ENCODE measurements at regions of chr1 and their contacts with region 1.

Region 1: GRCh38 chr1:154272217-154272998 is at the start of gene HAX1:
- DNase-seq: peak; percentile 87 to 94
- H3K4me3 ChIP-seq: peak within 1 kb of the TSS; percentile 95
- H3K27ac ChIP-seq: peak within 1 kb of the TSS; percentile 78
- H3K4me1 ChIP-seq: peaks cover 10% of the 10 kb centered on the region
- H3K27me3 ChIP-seq: no peaks in the 10 kb centered on the region
- CTCF ChIP-seq: peak; percentile 86
- total RNA-seq, gene HAX1: 89.7 and 92.3 TPM in 2 replicates

Region 2: GRCh38 chr1:153796791-153797659 is 475.4 kb before region 1 on chr1:
- CTCF ChIA-PET with region 1: no interaction called
- POLR2A ChIA-PET with region 1: no interaction called
- intact Hi-C with region 1: loop called (anchors 5 kb)
- DNase-seq: peak; percentile 48 to 73
- H3K4me3 ChIP-seq: no peak overlapping the region
- H3K27ac ChIP-seq: no peak overlapping the region
- H3K4me1 ChIP-seq: no peaks in the 10 kb centered on the region; the same call in 1 of the 2 replicates
- H3K27me3 ChIP-seq: no peaks in the 10 kb centered on the region
- CTCF ChIP-seq: peak; percentile 93

Region 3: GRCh38 chr1:154183045-154183915 is 89.1 kb before region 1 on chr1:
- CTCF ChIA-PET with region 1: no interaction called
- POLR2A ChIA-PET with region 1: no interaction called
- intact Hi-C with region 1: loop called (anchors 2 kb)
- DNase-seq: peak; percentile 97 to 98
- H3K4me3 ChIP-seq: peak overlapping the region; percentile 83
- H3K27ac ChIP-seq: peak overlapping the region; percentile 74
- H3K4me1 ChIP-seq: peaks cover 24% of the 10 kb centered on the region
- H3K27me3 ChIP-seq: no peaks in the 10 kb centered on the region
- CTCF ChIP-seq: no peak

Region 4: DNA sequence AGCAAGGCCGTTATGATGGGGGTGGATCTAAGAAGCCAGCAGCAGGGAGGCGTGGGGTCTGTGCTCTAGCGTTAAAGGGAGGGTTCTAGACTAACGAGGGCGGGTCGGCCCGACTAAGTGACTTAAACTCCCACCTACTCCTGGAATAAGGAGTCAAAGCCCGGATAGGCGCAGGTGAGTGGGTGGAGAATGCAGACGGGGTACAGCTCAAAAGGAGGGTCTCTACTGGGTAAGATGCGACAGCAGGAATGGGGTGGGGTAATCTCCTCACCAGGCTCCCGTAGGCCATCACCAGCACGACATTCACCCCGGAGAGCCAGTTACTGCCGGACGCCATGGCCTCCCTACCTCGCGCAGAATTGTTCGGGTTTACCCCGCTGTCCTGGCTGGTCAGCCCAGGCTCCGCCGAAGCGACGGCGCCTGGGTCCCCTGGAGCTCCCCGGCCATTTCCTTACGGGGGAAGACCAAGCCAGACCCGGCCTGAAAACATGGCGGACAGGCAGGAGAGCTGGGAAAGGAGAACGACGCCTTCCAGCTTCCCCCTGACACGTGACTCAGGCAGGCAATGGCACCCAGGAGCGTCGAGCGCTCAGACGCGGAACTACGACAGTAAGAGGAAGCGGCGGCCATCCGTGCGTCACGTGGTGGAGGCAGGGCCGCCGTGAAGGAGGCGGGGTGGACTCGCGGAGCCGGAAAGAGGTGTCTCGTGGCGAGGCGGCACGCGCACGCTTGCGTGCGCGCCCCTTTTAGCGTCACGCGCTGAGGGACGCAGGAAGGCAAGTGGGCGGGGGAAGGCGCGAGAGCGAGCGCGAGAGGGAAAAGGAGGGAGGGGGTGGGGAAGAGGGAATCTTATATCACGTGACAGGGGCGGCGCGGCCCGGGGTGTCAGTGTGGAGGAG is 52.1 kb before region 1 on chr1 and contains the start of gene UBAP2L:
- CTCF ChIA-PET with region 1: interaction called, 14 read pairs
- POLR2A ChIA-PET with region 1: no interaction called
- intact Hi-C with region 1: no loop called
- DNase-seq: peak; percentile 94 to 98
- H3K4me3 ChIP-seq: peak within 1 kb of the TSS; percentile 99
- H3K27ac ChIP-seq: peak within 1 kb of the TSS; percentile 97
- H3K4me1 ChIP-seq: peaks cover 33% of the 10 kb centered on the region
- H3K27me3 ChIP-seq: no peaks in the 10 kb centered on the region
- CTCF ChIP-seq: no peak
- total RNA-seq, gene UBAP2L: 101 and 157 TPM in 2 replicates

Region 5: GRCh38 chr1:154434346-154435085 is 162.1 kb after region 1 on chr1:
- CTCF ChIA-PET with region 1: no interaction called
- POLR2A ChIA-PET with region 1: no interaction called
- intact Hi-C with region 1: no loop called
- DNase-seq: no peak
- H3K4me3 ChIP-seq: no peak overlapping the region
- H3K27ac ChIP-seq: no peak overlapping the region
- H3K4me1 ChIP-seq: peaks cover 27% of the 10 kb centered on the region
- H3K27me3 ChIP-seq: no peaks in the 10 kb centered on the region
- CTCF ChIP-seq: no peak

Region 6: GRCh38 chr1:154546264-154547063 is 274.1 kb after region 1 on chr1:
- CTCF ChIA-PET with region 1: no interaction called
- POLR2A ChIA-PET with region 1: no interaction called
- intact Hi-C with region 1: loop called (anchors 5 kb)
- DNase-seq: peak; percentile 39 to 66
- H3K4me3 ChIP-seq: no peak overlapping the region
- H3K27ac ChIP-seq: no peak overlapping the region
- H3K4me1 ChIP-seq: no peaks in the 10 kb centered on the region
- H3K27me3 ChIP-seq: peaks cover 33% of the 10 kb centered on the region
- CTCF ChIP-seq: peak; percentile 85

Measured in PC-9 (cell line).